GM12878 (cell line): ENCODE measurements at regions of chr1 and their contacts with region 1.

Region 1: DNA sequence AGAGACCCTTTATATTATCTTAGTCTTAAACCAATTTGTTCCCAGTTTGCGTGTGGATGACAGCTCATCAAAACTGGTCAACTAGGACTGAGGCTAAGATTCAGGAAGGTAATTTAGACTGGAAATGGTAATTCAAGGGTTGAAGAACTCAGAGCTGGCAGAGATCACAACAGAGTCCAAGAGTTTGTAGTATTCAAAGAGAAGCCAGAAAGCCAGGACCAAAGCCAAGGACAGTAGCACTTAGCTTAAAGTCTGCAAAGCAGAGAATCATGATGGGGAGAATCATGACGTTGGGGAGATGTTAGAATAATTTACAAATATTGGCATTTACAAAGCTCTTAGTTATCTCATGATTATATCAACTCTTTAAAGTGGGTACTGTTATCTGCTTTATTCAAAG is 32.6 kb downstream of the RNF11 start:
- DNase-seq: peak; percentile 30
- ATAC-seq: peak; percentile 75
- H3K4me3 ChIP-seq: peak overlapping the region; percentile 29; the same call in 1 of the 2 replicates
- H3K27ac ChIP-seq: peak overlapping the region; percentile 72
- H3K4me1 ChIP-seq: peaks cover 17% of the 10 kb centered on the region
- H3K27me3 ChIP-seq: no peaks in the 10 kb centered on the region
- CTCF ChIP-seq: no peak
- EP300 ChIP-seq: no peak
- POLR2A ChIP-seq: no peak
- RAD21 ChIP-seq: no peak

Region 2: GRCh38 chr1:51253691-51254090 is 14.9 kb before region 1 on chr1:
- CTCF ChIA-PET with region 1: interaction called, 5 read pairs
- POLR2A ChIA-PET with region 1: interaction called, 3 read pairs
- RAD21 ChIA-PET with region 1: no interaction called
- SMC1A ChIA-PET with region 1: interaction called, 10 read pairs
- in situ Hi-C with region 1: no loop called
- intact Hi-C with region 1: no loop called
- DNase-seq: no peak
- ATAC-seq: no peak
- H3K4me3 ChIP-seq: no peak overlapping the region
- H3K27ac ChIP-seq: no peak overlapping the region
- H3K4me1 ChIP-seq: no peaks in the 10 kb centered on the region
- H3K27me3 ChIP-seq: no peaks in the 10 kb centered on the region
- CTCF ChIP-seq: no peak
- EP300 ChIP-seq: no peak
- POLR2A ChIP-seq: no peak
- RAD21 ChIP-seq: no peak

Region 3: DNA sequence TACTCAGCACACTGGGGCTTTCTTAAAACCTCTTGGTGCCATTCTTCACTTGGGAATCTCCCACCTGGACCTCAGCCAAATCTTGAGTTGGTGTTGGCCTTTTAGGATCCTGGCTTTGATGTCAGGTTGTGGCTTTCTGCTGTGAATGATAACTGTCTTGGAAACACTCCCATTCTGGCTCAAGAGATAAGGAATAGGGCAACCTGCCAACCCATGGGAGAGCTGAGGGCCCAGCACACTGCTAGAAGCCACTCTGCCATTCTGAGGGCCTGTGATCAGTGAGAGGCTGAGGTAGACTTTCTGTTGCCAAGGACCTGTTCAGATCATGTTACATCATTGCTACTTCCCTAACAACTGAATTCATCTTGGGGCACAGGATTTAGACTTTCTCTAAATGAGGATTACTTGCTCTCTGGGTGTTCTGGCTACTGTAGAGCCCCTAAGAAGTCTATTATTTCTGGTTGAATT is 15.9 kb after region 1 on chr1:
- CTCF ChIA-PET with region 1: interaction called, 5 read pairs
- POLR2A ChIA-PET with region 1: interaction called, 4 read pairs
- RAD21 ChIA-PET with region 1: no interaction called
- SMC1A ChIA-PET with region 1: interaction called, 11 read pairs
- in situ Hi-C with region 1: no loop called
- intact Hi-C with region 1: loop called (anchors 2 kb)
- DNase-seq: no peak
- ATAC-seq: peak; percentile 88
- H3K4me3 ChIP-seq: no peak overlapping the region
- H3K27ac ChIP-seq: peak overlapping the region; percentile 44; the same call in 1 of the 2 replicates
- H3K4me1 ChIP-seq: peaks cover 32% of the 10 kb centered on the region
- H3K27me3 ChIP-seq: no peaks in the 10 kb centered on the region
- CTCF ChIP-seq: no peak
- EP300 ChIP-seq: no peak
- POLR2A ChIP-seq: no peak
- RAD21 ChIP-seq: no peak

Region 4: GRCh38 chr1:51296383-51297357 is 28.0 kb after region 1 on chr1:
- CTCF ChIA-PET with region 1: interaction called, 17 read pairs
- POLR2A ChIA-PET with region 1: interaction called, 4 read pairs
- RAD21 ChIA-PET with region 1: interaction called, 3 read pairs
- SMC1A ChIA-PET with region 1: interaction called, 4 read pairs
- in situ Hi-C with region 1: no loop called
- intact Hi-C with region 1: no loop called
- DNase-seq: peak; percentile 51
- ATAC-seq: peak; percentile 81
- H3K4me3 ChIP-seq: peak overlapping the region; percentile 62; the same call in 1 of the 2 replicates
- H3K27ac ChIP-seq: peak overlapping the region; percentile 23; the same call in 1 of the 2 replicates
- H3K4me1 ChIP-seq: peaks cover 32% of the 10 kb centered on the region
- H3K27me3 ChIP-seq: no peaks in the 10 kb centered on the region; a peak in 1 of 4 replicates
- CTCF ChIP-seq: peak; percentile 92 to 99 (median 97)
- EP300 ChIP-seq: 0 out of 4 replicates have a peak, but pooled peaks of 1 of the 2 experiments have one; percentile 16
- POLR2A ChIP-seq: no peak; the same call in 1 of the 2 replicates
- RAD21 ChIP-seq: peak; percentile 97

Region 5: DNA sequence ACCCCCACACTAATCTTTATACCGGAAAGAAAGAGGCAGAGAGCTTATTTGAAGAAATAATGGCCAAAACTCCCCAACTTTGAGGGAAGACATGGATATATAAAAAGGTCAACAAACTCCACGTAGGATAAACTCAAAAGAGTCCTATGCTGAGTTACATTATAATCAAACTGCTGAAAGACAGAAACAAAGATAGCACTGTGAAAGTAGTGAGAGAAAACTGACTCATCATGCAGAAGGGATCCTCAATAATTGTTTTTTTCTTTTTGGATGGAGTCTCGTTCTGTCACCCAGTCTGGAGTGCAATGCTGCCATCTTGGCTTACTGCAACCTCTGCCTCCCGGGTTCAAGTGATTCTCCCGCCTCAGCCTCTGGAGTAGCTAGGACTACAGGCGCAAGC is 110.2 kb after region 1 on chr1:
- CTCF ChIA-PET with region 1: no interaction called
- POLR2A ChIA-PET with region 1: no interaction called
- RAD21 ChIA-PET with region 1: no interaction called
- SMC1A ChIA-PET with region 1: no interaction called
- in situ Hi-C with region 1: no loop called
- intact Hi-C with region 1: no loop called
- DNase-seq: no peak
- ATAC-seq: no peak
- H3K4me3 ChIP-seq: no peak overlapping the region
- H3K27ac ChIP-seq: no peak overlapping the region
- H3K4me1 ChIP-seq: no peaks in the 10 kb centered on the region
- H3K27me3 ChIP-seq: no peaks in the 10 kb centered on the region
- CTCF ChIP-seq: no peak
- EP300 ChIP-seq: no peak
- POLR2A ChIP-seq: no peak
- RAD21 ChIP-seq: no peak